Activated naive CD4-positive, alpha-beta T cell treated with anti-CD3 and anti-CD28 coated beads, Interleukin-2, amount 10 ng/mL, durations not matched to agents 7 days and 5 days (primary cell): ENCODE measurements at regions of chr11 and their contacts with region 1.

Region 1: GRCh38 chr11:134261626-134262488 is 8.5 kb downstream of the ACAD8 start:
- DNase-seq: peak; percentile 66
- H3K4me3 Mint-ChIP-seq: no peak overlapping the region
- H3K27ac Mint-ChIP-seq: no peak overlapping the region
- H3K4me1 Mint-ChIP-seq: peaks cover 22% of the 10 kb centered on the region
- H3K27me3 Mint-ChIP-seq: no peaks in the 10 kb centered on the region

Region 2: GRCh38 chr11:134207538-134208239 is 54.2 kb before region 1 on chr11:
- CTCF ChIA-PET with region 1: interaction called, 11 read pairs
- DNase-seq: peak; percentile 80
- H3K4me3 Mint-ChIP-seq: no peak overlapping the region
- H3K27ac Mint-ChIP-seq: peak overlapping the region; percentile 11
- H3K4me1 Mint-ChIP-seq: peaks cover 11% of the 10 kb centered on the region
- H3K27me3 Mint-ChIP-seq: no peaks in the 10 kb centered on the region

Region 3: DNA sequence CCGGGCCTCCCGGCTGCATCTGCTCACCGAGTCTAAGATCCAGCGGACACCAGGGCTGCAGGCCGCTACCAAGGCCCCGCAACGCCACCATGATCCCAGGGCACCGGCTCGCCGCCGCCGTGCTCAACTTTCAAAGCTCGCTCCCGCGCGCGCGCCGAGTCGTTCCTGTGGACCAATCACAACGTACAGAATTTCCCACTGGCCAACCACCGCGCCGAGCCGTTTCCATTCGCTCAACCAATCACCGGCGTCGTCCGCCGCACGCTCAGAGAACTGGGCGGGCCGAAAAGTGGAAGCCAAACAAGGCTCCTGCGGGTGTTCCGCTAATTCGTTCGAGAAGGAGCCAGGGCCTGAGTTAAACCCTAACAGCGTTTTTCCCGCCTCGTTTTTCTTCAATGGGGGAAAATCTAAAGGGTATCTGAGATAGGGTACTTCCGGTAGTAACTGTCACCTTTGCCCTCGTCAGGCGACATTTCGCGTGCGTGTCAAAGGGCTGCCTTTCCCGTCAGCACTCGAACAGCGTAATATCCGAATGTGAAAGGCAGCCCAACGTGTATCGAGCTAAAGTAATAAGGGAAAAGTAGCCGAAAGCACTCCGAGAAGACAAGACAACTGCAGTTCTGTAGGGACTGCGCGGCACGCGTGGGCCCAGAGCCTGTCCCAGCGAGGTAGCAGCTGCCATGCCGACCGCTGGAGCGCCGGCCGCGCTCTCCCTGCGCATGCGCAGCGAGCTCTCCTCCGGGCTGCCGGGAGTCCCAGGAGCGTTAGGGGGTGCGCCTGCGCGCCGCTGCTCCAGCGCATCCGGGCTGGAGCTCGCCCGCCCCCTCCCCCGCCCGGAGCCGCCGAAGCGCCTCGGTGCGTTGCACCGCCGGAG is 37.8 kb before region 1 on chr11 and contains the starts of genes NCAPD3 and VPS26B:
- CTCF ChIA-PET with region 1: interaction called, 11 read pairs
- DNase-seq: peak; percentile 98
- H3K4me3 Mint-ChIP-seq: peak within 1 kb of the TSS; percentile 96
- H3K27ac Mint-ChIP-seq: peak within 1 kb of the TSS; percentile 98
- H3K4me1 Mint-ChIP-seq: peaks cover 73% of the 10 kb centered on the region
- H3K27me3 Mint-ChIP-seq: no peaks in the 10 kb centered on the region

Region 4: DNA sequence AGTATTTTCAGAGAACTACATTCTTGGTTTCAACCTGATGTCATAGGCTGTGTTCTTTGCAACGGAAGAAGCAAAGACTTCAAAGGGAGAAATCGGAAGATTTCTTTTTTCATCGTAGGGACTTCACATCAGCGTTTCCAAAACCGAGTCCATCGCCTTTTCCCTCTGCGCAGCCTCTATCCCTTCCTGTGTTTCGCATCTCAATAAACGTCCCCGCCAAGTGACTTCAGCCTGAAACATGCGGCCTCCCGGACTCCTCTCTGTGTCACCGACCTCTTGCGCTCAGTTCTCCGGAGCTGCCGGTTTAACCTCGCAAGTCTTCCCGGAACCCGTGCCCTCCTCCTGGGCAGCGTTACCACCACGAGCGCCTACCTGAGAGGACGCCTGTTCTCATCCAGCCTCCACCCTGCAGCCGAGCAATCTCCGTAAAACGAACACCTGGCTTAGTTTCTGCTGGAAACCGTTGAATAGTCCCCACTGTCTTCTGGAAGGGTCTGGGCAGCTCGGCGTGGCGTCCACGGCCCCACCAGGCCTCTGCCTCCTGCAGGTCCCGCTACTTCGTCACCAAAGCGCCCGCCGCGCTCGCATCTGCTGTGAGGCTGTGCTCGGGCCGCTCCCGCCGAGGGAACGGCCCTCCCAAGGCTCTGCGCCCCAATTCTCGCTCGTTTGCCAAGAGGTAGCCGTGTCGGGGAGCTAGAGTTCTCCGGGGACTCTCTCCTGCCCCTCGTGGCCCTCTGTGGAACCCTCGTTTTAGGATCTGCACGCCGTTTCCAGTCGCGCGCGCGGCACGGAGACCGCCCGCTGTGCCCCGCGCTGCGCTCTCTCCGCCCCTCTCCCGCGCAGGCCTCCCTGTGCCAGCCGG is 13.9 kb after region 1 on chr11 and contains the start of gene GLB1L3:
- CTCF ChIA-PET with region 1: interaction called, 68 read pairs
- DNase-seq: peak; percentile 91
- H3K4me3 Mint-ChIP-seq: peak within 1 kb of the TSS; percentile 94
- H3K27ac Mint-ChIP-seq: peak within 1 kb of the TSS; percentile 97
- H3K4me1 Mint-ChIP-seq: peaks cover 61% of the 10 kb centered on the region
- H3K27me3 Mint-ChIP-seq: peaks cover 21% of the 10 kb centered on the region

Region 5: GRCh38 chr11:134293110-134293730 is 31.4 kb after region 1 on chr11:
- CTCF ChIA-PET with region 1: no interaction called
- DNase-seq: no peak
- H3K4me3 Mint-ChIP-seq: no peak overlapping the region
- H3K27ac Mint-ChIP-seq: no peak overlapping the region
- H3K4me1 Mint-ChIP-seq: no peaks in the 10 kb centered on the region
- H3K27me3 Mint-ChIP-seq: no peaks in the 10 kb centered on the region